ENCODE measurements at regions of chr19 and their contacts with region 1.

Region 1: DNA sequence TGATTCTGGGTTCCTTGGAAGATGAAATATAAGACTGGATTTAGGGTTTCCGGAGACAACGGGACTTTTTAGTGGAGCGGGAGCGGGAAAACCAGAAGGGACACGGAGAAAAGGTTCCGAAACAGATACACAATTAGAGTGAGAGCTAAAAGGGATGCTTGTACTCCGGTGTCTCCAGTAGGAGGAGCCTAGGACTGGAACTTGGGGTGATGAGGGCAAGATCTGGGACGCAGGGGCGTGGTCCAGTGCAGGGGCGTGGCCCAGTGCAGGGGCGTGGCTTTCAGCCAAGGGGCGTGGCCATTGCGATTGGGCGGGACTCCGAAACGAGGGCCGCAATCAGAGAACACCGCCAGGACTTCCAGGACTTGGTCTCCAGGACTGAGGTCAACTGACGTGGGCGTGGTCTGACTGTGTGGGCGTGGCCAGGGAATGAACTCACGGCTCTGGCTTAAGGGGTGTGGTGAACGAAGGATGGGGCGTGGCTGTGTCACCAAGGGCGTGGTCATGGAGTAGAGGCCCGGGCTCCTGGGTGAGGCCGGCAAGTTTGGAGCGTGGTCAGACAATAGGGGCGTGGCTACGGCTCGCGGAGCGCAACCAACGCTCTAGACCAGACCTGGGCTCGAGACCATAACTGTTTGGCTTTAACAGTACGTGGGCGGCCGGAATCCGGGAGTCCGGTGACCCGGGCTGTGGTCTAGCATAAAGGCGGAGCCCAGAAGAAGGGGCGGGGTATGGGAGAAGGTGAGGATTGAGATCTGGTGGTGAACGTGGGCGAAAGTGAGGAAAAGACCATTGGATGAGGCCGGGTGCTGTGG is at the start of gene DKKL1:
- DNase-seq: peak; percentile 97 to 100
- H3K4me3 ChIP-seq: peak within 1 kb of the TSS; percentile 85
- H3K27ac ChIP-seq: no peak within 1 kb of the TSS
- H3K4me1 ChIP-seq: 0 out of 2 replicates have a peak, but pooled peaks cover 10% of the 10 kb centered on the region
- H3K27me3 ChIP-seq: no peaks in the 10 kb centered on the region
- CTCF ChIP-seq: peak; percentile 43; the same call in 1 of the 2 replicates
- total RNA-seq, gene DKKL1: 0.85 TPM in 1 of 2 replicates, not detected in the other

Region 2: DNA sequence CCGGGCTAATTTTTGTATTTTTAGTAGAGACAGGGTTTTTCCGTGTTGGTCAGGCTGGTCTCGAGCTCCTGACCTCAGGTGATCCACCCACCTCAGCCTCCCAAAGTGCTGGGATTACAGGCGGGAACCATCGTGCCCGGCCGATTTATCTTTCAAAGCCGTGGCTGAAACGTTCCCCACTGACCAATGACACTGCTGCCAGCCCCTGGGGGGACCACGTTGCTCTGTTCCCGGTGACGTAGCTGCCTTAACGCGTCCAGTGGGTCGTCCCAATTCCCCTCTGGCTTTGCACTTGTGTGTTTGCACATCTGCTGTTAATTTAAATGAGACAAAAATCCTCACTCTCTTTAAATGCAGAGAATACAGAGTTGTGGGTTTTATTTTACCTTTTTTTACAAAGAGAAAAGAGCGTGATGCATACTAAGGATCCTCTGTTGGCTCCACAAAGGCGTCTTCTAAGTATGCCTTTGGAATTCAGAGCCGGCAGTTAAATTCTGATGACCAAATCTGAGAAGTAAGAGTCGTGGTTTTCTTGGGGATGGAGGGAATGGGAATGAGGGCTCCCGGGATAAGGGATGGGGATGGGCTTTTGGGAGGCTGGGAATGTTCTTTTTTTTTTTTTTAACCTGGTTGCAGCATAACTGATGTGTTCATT is 833.3 kb before region 1 on chr19:
- CTCF ChIA-PET with region 1: no interaction called
- POLR2A ChIA-PET with region 1: no interaction called
- intact Hi-C with region 1: no loop called
- DNase-seq: no peak
- H3K4me3 ChIP-seq: no peak overlapping the region
- H3K27ac ChIP-seq: no peak overlapping the region
- H3K4me1 ChIP-seq: no peaks in the 10 kb centered on the region
- H3K27me3 ChIP-seq: no peaks in the 10 kb centered on the region
- CTCF ChIP-seq: no peak

Region 3: GRCh38 chr19:48812094-48812929 is 551.2 kb before region 1 on chr19:
- CTCF ChIA-PET with region 1: no interaction called
- POLR2A ChIA-PET with region 1: interaction called, 20 read pairs
- intact Hi-C with region 1: no loop called
- DNase-seq: peak; percentile 70 to 87
- H3K4me3 ChIP-seq: peak overlapping the region; percentile 88
- H3K27ac ChIP-seq: no peak overlapping the region
- H3K4me1 ChIP-seq: 0 out of 2 replicates have a peak, but pooled peaks cover 14% of the 10 kb centered on the region
- H3K27me3 ChIP-seq: no peaks in the 10 kb centered on the region
- CTCF ChIP-seq: no peak

Region 4: GRCh38 chr19:49294401-49294800 is 69.1 kb before region 1 on chr19:
- CTCF ChIA-PET with region 1: no interaction called
- POLR2A ChIA-PET with region 1: no interaction called
- intact Hi-C with region 1: no loop called
- DNase-seq: no peak
- H3K4me3 ChIP-seq: no peak overlapping the region
- H3K27ac ChIP-seq: no peak overlapping the region
- H3K4me1 ChIP-seq: no peaks in the 10 kb centered on the region
- H3K27me3 ChIP-seq: peaks cover 89% of the 10 kb centered on the region
- CTCF ChIP-seq: no peak

Region 5: DNA sequence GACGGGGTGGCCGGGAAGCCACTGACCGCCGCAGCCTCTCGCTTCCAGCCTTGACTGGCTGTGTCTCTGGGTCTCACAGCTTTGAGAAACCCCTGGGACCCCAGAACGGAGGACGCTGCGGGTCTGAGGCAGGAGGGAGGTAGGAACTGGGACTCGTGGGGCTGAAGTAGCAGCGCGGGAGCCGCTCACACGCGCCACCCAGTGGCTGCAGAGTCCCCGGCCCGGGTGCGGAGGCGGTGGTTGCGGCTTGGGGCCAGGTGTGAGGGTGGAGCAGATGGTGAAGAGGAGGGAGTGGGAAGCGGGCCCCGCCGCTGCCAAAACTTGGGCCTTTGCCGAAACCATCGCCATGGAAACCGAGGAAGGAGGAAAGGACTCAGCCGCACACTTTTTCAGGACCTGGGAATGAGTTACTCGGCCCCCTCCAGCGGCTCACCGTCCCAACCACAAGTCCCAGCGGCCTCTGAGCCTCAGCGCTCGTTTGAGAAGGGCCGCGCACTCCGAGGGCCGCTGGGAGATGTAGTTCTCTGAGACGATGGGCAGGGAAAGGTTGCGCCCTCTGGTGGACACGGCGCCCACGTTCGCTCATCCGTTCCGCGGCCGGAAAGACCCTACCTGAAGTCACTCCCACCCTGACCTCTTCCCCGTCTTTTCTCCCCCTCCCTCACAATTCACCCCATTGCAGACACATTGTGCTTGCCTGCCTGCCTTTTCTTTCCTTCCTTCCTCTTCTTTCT is 80.1 kb after region 1 on chr19:
- CTCF ChIA-PET with region 1: no interaction called
- POLR2A ChIA-PET with region 1: no interaction called
- intact Hi-C with region 1: loop called (anchors 1 kb)
- DNase-seq: peak; percentile 84 to 92
- H3K4me3 ChIP-seq: peak overlapping the region; percentile 83
- H3K27ac ChIP-seq: no peak overlapping the region
- H3K4me1 ChIP-seq: peaks cover 9% of the 10 kb centered on the region; the same call in 1 of the 2 replicates
- H3K27me3 ChIP-seq: peaks cover 25% of the 10 kb centered on the region
- CTCF ChIP-seq: peak; percentile 83

Region 6: DNA sequence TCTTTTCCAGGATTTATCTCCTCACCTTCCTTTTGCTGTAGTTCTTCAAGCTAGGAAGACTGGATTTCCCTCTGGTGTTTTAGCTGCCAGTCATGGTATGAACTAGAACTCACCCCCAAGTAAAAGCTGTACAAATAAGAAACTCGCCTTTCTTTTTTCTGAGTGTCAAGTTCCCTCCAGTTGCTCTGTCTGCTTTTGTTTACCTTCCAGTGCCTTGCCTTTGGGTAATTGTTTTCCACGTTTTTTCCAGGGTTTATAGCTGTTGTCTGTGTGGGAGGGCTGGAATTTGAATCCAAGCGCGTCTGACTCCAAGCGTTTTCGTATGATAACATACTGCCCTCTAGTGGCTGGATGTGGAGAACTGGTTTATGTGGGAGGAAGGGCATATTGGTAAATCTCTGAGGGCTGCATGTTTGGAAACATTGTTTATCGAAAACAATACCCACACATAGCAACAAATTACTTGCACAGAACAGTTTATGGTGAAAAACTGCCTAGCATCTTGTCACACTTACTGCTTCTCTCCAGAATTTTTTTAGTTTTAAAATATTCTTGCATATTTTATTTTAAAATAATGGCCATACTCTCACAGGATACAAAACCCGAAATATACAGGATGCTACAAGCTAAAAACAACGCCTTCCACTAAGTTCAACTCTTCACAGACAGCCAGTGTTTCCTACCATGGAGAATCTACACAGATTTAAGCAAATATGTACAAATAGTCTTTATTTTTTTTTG is 183.5 kb after region 1 on chr19:
- CTCF ChIA-PET with region 1: no interaction called
- POLR2A ChIA-PET with region 1: interaction called, 10 read pairs
- intact Hi-C with region 1: no loop called
- DNase-seq: peak; percentile 67 to 86
- H3K4me3 ChIP-seq: peak overlapping the region; percentile 32; the same call in 1 of the 2 replicates
- H3K27ac ChIP-seq: no peak overlapping the region
- H3K4me1 ChIP-seq: peaks cover 11% of the 10 kb centered on the region
- H3K27me3 ChIP-seq: 0 out of 2 replicates have a peak, but pooled peaks cover 5% of the 10 kb centered on the region
- CTCF ChIP-seq: peak; percentile 94

Region 7: DNA sequence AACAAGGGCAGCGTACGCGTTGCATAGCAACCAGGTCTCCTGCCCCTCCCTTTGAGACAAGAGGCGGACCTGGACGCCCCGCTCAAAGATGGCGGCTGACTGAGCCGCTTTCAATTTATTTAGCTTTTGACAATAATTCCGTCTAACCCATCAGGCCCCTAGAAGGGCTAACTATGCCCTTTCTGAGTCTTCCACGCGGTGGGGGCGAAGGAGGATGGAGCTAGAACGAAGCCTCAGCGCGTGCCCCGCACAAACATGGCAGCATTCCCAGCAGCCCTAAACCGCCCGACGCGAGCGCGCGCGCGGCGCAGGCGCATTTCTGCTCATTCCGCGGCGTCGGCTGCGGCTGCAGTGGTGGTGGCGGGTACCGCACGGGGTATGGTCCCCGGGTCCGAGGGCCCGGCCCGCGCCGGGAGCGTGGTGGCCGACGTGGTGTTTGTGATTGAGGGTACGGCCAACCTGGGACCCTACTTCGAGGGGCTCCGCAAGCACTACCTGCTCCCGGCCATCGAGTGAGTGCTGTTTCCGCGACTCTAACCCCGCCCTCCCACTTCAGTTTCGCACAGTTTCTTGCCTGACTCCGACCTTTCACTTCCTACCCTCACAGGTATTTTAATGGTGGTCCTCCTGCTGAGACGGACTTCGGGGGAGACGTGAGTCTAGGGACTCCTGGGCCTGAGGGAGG is 454.6 kb after region 1 on chr19 and contains the start of gene MED25:
- CTCF ChIA-PET with region 1: interaction called, 14 read pairs
- POLR2A ChIA-PET with region 1: no interaction called
- intact Hi-C with region 1: no loop called
- DNase-seq: peak; percentile 69 to 89
- H3K4me3 ChIP-seq: peak within 1 kb of the TSS; percentile 84
- H3K27ac ChIP-seq: peak within 1 kb of the TSS; percentile 72
- H3K4me1 ChIP-seq: peaks cover 24% of the 10 kb centered on the region
- H3K27me3 ChIP-seq: no peaks in the 10 kb centered on the region
- CTCF ChIP-seq: no peak
- total RNA-seq, gene MED25: 92.2 and 99.6 TPM in 2 replicates

Measured in PC-9 (cell line).